ENCODE measurements at regions of chr10 and their contacts with region 1.

Region 1: GRCh38 chr10:101214446-101215396 is 14.5 kb downstream of the LBX1 start:
- DNase-seq: peak; percentile 77 to 92
- H3K4me3 ChIP-seq: peak overlapping the region; percentile 19; the same call in 1 of the 2 replicates
- H3K4me1 ChIP-seq: peaks cover 3% of the 10 kb centered on the region; the same call in 1 of the 2 replicates
- H3K27me3 ChIP-seq: peaks cover 13% of the 10 kb centered on the region

Region 2: DNA sequence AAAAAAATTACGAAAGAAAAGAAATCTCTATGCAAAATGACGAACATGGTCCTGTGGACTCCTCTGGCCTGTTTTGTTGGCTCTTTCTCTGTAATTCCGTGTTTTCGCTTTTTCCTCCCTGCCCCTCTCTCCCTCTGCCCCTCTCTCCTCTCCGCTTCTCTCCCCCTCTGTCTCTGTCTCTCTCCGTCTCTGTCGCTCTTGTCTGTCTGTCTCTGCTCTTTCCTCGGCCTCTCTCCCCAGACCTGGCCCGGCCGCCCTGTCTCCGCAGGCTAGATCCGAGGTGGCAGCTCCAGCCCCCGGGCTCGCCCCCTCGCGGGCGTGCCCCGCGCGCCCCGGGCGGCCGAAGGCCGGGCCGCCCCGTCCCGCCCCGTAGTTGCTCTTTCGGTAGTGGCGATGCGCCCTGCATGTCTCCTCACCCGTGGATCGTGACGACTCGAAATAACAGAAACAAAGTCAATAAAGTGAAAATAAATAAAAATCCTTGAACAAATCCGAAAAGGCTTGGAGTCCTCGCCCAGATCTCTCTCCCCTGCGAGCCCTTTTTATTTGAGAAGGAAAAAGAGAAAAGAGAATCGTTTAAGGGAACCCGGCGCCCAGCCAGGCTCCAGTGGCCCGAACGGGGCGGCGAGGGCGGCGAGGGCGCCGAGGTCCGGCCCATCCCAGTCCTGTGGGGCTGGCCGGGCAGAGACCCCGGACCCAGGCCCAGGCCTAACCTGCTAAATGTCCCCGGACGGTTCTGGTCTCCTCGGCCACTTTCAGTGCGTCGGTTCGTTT is 385.4 kb before region 1 on chr10:
- in situ Hi-C with region 1: no loop called
- DNase-seq: peak; percentile 16 to 62
- H3K4me3 ChIP-seq: peak overlapping the region; percentile 28
- H3K4me1 ChIP-seq: peaks cover 12% of the 10 kb centered on the region
- H3K27me3 ChIP-seq: no peaks in the 10 kb centered on the region

Region 3: DNA sequence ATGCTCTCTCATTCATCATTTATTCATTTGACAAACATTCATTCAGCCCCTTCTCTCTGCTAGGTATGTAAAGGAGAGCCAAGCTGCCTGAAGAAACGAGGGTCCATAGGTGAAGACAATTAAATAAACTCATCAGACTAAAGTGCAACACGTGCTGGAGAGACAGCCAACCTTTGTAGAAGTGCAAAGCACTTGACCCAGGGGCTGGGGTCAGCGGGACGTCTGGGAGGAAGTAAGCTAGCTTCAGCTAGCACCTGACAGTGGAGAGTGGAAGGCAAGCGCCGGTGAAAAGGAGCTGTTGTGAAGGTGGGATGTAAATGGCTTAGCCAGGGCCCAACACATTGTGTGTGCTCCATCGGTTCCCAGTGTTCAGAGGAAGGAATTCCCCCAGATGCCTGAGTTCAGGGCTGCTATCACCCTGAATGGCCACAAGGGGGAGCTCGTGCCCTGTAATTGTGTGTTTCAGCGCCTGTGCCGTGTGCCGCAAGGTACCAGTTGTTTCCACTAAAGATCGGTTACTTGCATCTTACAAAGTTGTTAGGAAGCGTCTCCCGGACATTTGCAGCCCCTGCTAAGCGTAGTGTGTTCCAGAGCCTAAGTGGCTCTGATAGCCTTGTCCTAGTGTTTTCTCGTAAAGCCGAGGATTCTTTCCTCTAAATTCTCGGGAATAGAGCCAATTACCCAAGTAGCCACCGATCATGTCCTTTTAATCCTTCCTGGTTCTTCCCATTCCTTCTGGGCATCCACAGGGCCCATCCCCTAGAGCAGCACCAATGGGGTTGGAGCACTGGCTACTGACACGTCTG is 53.0 kb before region 1 on chr10:
- in situ Hi-C with region 1: loop called (anchors 5 kb)
- DNase-seq: peak; percentile 81 to 83
- H3K4me3 ChIP-seq: peak overlapping the region; percentile 12; the same call in 1 of the 2 replicates
- H3K4me1 ChIP-seq: peaks cover 6% of the 10 kb centered on the region
- H3K27me3 ChIP-seq: no peaks in the 10 kb centered on the region

Region 4: GRCh38 chr10:101291331-101292193 is 76.8 kb after region 1 on chr10:
- in situ Hi-C with region 1: loop called (anchors 5 kb)
- DNase-seq: peak; percentile 84 to 92
- H3K4me3 ChIP-seq: peak overlapping the region; percentile 38
- H3K4me1 ChIP-seq: peaks cover 5% of the 10 kb centered on the region; the same call in 1 of the 2 replicates
- H3K27me3 ChIP-seq: no peaks in the 10 kb centered on the region

Region 5: GRCh38 chr10:101569838-101570766 is 355.4 kb after region 1 on chr10:
- in situ Hi-C with region 1: loop called (anchors 5 kb)
- DNase-seq: peak; percentile 85 to 92
- H3K4me3 ChIP-seq: peak overlapping the region; percentile 73
- H3K4me1 ChIP-seq: peaks cover 6% of the 10 kb centered on the region
- H3K27me3 ChIP-seq: no peaks in the 10 kb centered on the region

Region 6: DNA sequence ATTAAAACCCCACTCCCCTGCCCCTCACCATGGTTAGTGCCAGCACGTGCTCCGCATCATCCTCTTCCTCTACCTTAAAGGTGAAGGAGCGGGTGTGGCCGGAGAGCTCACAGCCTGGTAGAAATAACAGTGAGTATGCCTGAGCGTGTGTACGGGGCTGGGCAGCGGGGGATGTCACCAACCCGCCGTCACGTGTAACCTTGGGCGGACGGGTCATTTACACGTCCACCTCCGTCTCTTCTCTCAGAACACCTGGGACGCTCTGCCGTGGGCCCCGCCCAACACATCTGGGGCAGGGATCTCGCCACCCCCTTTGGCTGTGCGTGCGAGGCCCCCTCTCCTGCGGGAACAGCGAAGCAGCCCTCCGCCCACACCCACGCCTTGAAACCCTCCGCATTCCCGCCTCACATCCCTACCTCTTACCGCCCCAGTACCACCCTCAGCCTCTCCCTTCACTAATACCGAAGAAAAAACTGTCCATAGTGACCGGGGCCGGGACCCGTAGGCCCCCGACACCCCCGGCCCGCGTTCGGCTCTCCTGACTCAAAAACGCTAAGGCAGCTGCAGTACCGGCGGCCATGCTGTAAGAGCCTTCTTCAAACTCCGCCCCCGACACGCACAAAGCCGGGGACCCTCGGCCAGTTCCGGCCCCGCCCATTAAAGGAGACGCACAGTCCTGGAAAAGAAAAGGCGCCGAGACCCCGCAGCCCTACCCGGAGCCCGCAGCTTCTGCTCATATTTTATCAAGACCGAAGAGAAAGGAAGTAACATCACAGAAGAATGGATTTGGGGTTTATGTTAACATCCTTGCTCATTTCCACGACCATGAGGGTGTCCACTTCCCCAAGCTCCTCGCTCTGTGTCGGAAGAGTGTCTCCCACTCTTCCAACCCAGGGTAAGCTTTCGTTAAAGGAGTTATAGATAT is 568.4 kb after region 1 on chr10 and contains the start of gene NPM3:
- in situ Hi-C with region 1: loop called (anchors 5 kb)
- DNase-seq: peak; percentile 85 to 94
- H3K4me3 ChIP-seq: peak within 1 kb of the TSS; percentile 85
- H3K4me1 ChIP-seq: peaks cover 21% of the 10 kb centered on the region
- H3K27me3 ChIP-seq: no peaks in the 10 kb centered on the region